Right ventricle myocardium inferior (tissue), 1 donor: ENCODE measurements at regions of chr22 and their contacts with region 1.

Region 1: DNA sequence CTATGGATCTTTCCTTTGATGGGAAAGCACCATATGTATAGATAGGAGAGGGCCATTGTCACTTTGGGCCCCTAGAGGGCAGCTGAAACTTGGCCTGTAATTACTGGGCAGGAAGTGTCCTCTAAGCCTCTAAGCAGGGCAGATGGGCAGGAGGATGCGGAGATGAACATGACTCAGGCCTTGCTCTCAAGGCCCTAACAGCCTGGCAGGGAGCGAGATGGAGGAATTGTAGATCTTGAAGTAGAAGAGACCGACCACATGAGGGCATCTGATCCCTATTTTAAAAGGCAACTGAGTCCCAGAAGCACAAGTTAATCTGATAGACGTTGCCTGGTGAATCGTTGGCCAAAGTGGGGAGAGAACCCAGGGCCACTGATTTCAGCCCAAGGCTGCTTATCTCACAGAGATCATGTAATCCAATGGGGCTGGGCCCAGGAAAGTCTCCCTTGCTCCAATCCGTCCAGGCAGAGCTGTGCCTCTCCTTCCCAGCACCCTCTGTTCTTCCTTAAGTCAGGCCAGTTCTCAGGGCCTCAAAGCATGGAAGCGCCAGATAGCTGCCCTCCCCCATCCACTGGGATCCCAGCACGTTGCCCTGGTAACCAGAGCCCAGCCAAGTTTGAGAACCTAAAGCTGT is 2.5 kb upstream of the SEPTIN3 start:
- DNase-seq: no peak
- ATAC-seq: peak; percentile 26

Region 2: GRCh38 chr22:41862160-41862529 is 104.6 kb before region 1 on chr22:
- intact Hi-C with region 1: no loop called
- DNase-seq: no peak
- ATAC-seq: peak; percentile 6

Region 3: DNA sequence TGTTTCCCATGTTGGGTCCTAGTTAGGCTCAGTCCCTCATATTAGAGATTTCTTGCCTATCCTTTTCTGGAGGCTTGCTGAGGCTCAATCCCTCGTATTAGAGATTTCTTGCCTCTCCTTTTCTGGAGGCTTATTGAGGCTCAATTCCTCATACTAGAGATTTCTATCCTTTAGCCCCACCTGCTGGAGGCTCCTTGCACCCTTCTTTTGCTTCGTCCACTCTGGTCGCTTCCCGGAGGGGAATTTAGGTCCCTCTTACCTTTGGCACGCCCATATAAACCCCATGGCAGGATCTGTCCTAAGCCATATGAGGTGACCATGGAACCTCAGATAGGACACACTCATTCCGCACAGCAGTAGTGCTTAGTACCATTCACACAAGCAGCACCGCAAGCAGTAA is 148.0 kb after region 1 on chr22:
- intact Hi-C with region 1: loop called (anchors 5 kb)
- DNase-seq: no peak
- ATAC-seq: no peak